Activated T-helper 2 cell treated with anti-CD3 and anti-CD28 coated beads, Interferon-gamma antibody, Interleukin-2, Interleukin-4, amounts not matched to agents 10 μg/mL and 5 μg/mL and 100 μg/mL, durations not matched to agents 14 hours and 24 hours and 36 hours (primary cell): ENCODE measurements at regions of chr1 and their contacts with region 1.

Region 1: DNA sequence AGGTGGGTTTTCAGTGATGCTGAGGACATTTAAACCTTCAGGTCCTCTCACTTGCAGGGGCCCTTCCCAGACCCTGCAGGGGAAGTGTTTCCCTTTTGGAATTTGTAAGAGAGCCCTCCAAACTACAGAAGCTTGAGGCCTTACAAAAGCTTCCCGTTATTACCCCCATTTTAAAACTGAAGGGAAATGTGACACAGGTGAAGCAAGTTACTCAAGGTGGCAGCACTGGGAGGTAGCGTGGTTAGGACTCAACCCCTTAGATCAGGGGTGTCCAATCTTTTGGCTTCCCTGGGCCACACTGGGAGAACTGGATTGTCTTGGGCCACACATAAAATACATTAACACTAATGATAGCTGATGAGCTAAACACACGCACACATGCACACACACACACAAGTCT is 15.9 kb upstream of the ZC3H12A start:
- DNase-seq: no peak
- H3K4me3 Mint-ChIP-seq: no peak overlapping the region
- H3K27ac Mint-ChIP-seq: no peak overlapping the region
- H3K4me1 Mint-ChIP-seq: peaks cover 6% of the 10 kb centered on the region
- H3K27me3 Mint-ChIP-seq: no peaks in the 10 kb centered on the region

Region 2: GRCh38 chr1:37372302-37372701 is 86.2 kb before region 1 on chr1:
- intact Hi-C with region 1: no loop called
- DNase-seq: no peak
- H3K4me3 Mint-ChIP-seq: no peak overlapping the region
- H3K27ac Mint-ChIP-seq: no peak overlapping the region
- H3K4me1 Mint-ChIP-seq: no peaks in the 10 kb centered on the region
- H3K27me3 Mint-ChIP-seq: no peaks in the 10 kb centered on the region

Region 3: DNA sequence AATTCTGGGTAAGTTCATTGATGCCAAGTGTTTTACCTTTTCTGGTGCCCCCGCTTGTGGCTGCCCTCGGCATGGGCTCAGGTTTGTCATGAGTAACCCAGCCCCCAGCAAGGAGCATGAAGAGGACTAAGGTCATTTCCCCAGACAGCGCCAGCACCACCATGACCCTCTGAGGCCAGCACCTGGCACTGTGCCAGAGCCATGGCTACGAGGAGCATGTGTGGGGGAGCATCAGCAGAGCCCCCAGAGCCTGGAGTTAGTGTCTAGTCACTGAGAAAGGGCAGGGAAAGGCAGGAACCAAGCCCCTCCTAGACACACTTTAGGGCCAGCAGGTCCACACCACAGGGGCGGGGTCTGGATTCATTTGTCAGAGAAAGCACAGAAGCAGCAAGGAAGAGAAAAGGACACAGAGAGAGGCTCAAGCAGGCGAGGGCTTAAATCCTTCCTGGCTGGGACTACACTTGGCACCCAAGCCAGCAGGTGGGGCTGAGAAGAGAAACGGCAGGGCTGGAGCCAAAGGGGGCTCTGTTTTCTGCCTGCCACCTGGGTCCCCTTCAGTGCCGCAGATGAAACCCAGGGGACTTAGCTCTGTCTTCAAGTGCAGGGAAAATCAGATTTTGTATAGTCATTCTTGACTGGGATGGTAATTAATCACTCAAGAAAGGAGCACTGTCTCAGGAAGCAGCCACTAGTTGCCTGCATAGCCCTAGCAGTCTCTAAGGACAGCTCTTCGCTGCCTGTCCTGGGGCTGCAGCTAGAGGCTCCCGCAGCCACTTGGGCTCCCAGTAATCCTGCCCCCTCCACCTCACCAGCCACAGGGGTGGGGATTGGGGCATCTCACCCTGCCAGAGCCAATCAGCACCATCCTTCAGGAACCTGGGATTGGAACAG is 63.7 kb before region 1 on chr1:
- intact Hi-C with region 1: no loop called
- DNase-seq: no peak
- H3K4me3 Mint-ChIP-seq: no peak overlapping the region
- H3K27ac Mint-ChIP-seq: no peak overlapping the region
- H3K4me1 Mint-ChIP-seq: no peaks in the 10 kb centered on the region
- H3K27me3 Mint-ChIP-seq: peaks cover 12% of the 10 kb centered on the region

Region 4: GRCh38 chr1:37486680-37487618 is 28.4 kb after region 1 on chr1:
- intact Hi-C with region 1: loop called (anchors 1 kb)
- DNase-seq: peak; percentile 62
- H3K4me3 Mint-ChIP-seq: no peak overlapping the region
- H3K27ac Mint-ChIP-seq: peak overlapping the region; percentile 10
- H3K4me1 Mint-ChIP-seq: peaks cover 12% of the 10 kb centered on the region
- H3K27me3 Mint-ChIP-seq: no peaks in the 10 kb centered on the region

Region 5: GRCh38 chr1:37553927-37554808 is 95.6 kb after region 1 on chr1 and contains the start of gene SNIP1:
- intact Hi-C with region 1: loop called (anchors 5 kb)
- DNase-seq: peak; percentile 89
- H3K4me3 Mint-ChIP-seq: peak within 1 kb of the TSS; percentile 98
- H3K27ac Mint-ChIP-seq: peak within 1 kb of the TSS; percentile 93
- H3K4me1 Mint-ChIP-seq: peaks cover 41% of the 10 kb centered on the region
- H3K27me3 Mint-ChIP-seq: no peaks in the 10 kb centered on the region
- total RNA-seq, gene SNIP1: 26.1 and 27.8 TPM in 2 replicates